ENCODE measurements at regions of chr2 and their contacts with region 1.

Region 1: DNA sequence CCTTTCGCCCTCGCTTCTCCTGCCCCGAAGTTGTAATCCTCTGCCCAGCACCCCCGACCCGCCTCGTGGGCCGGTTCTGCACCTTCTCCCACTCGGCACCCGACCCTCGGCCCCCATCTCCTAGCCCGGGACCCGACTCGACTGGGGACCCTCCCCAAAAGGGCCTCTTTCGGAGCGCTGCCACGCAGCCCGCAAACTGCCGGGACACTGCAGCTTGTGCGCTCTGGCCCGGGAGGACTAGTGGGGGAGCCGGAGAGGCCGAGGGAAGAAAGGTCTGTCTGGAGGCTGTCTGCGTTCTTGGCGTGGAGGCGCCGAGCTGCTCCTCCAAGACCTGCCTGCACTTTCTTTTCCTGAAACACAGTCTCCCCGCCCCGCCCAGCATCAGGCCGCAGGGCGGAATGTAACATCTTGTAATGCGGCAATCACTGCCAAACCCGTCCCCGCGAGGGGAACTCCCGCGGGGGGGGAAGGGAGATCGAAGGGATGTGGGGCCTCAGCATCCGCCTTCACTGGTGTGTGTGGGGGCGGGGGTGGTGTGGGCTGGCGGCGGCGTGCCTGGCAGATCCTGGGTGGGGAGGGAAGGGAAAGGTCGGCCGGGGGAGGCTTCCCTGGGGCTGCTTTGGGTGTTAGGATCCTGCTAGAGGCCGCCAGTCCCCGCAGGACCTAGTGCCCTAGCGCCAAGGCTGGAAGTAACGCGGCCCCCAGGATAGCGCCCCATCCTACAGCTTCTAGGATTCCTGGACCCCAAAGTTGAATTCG is 7.4 kb downstream of the DLX2 start:
- DNase-seq: no peak
- ATAC-seq: peak; percentile 68
- H3K4me3 Mint-ChIP-seq: peak overlapping the region; percentile 81
- H3K27ac Mint-ChIP-seq: peak overlapping the region; percentile 59
- H3K4me1 Mint-ChIP-seq: peaks cover 34% of the 10 kb centered on the region
- H3K27me3 Mint-ChIP-seq: peaks cover 59% of the 10 kb centered on the region
- CTCF ChIP-seq: no peak

Region 2: GRCh38 chr2:171956135-171956825 is 139.0 kb before region 1 on chr2:
- CTCF ChIA-PET with region 1: no interaction called
- POLR2A ChIA-PET with region 1: no interaction called
- intact Hi-C with region 1: no loop called
- DNase-seq: no peak
- ATAC-seq: no peak
- H3K4me3 Mint-ChIP-seq: no peak overlapping the region
- H3K27ac Mint-ChIP-seq: no peak overlapping the region
- H3K4me1 Mint-ChIP-seq: no peaks in the 10 kb centered on the region
- H3K27me3 Mint-ChIP-seq: no peaks in the 10 kb centered on the region
- CTCF ChIP-seq: no peak

Region 3: GRCh38 chr2:172046080-172046678 is 49.1 kb before region 1 on chr2:
- CTCF ChIA-PET with region 1: no interaction called
- POLR2A ChIA-PET with region 1: interaction called, 11 read pairs
- intact Hi-C with region 1: no loop called
- DNase-seq: no peak
- ATAC-seq: no peak
- H3K4me3 Mint-ChIP-seq: no peak overlapping the region
- H3K27ac Mint-ChIP-seq: no peak overlapping the region
- H3K4me1 Mint-ChIP-seq: no peaks in the 10 kb centered on the region
- H3K27me3 Mint-ChIP-seq: no peaks in the 10 kb centered on the region
- CTCF ChIP-seq: no peak

Region 4: GRCh38 chr2:172084734-172085459 is 10.4 kb before region 1 on chr2:
- CTCF ChIA-PET with region 1: no interaction called
- POLR2A ChIA-PET with region 1: interaction called, 4 read pairs
- intact Hi-C with region 1: loop called (anchors 1 kb)
- DNase-seq: peak; percentile 46
- ATAC-seq: peak; percentile 43
- H3K4me3 Mint-ChIP-seq: peak overlapping the region; percentile 75
- H3K27ac Mint-ChIP-seq: peak overlapping the region; percentile 79
- H3K4me1 Mint-ChIP-seq: peaks cover 44% of the 10 kb centered on the region
- H3K27me3 Mint-ChIP-seq: peaks cover 75% of the 10 kb centered on the region
- CTCF ChIP-seq: no peak

Region 5: DNA sequence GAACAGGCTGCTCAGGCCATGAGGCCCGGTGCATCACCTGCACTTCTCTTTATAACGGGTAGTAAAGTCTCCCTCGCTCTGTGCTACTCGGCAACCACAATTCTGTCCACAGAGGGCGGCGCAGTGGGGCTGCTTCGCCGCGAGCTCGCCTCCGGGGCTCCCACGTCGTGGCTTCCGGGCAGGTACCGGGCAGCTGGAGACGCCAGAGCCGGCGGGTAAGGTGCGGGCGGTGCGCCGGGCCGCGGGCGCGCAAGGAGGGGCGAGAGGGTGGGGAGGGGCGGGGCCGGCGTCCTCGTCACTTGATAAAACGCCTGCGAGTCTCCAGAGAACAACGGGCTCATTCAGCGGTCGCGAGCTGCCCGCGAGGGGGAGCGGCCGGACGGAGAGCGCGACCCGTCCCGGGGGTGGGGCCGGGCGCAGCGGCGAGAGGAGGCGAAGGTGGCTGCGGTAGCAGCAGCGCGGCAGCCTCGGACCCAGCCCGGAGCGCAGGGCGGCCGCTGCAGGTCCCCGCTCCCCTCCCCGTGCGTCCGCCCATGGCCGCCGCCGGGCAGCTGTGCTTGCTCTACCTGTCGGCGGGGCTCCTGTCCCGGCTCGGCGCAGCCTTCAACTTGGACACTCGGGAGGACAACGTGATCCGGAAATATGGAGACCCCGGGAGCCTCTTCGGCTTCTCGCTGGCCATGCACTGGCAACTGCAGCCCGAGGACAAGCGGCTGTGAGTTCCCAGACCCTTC is 332.1 kb after region 1 on chr2 and contains the start of gene ITGA6:
- CTCF ChIA-PET with region 1: no interaction called
- POLR2A ChIA-PET with region 1: no interaction called
- intact Hi-C with region 1: loop called (anchors 5 kb)
- DNase-seq: peak; percentile 38
- ATAC-seq: peak; percentile 72
- H3K4me3 Mint-ChIP-seq: peak within 1 kb of the TSS; percentile 79
- H3K27ac Mint-ChIP-seq: no peak within 1 kb of the TSS
- H3K4me1 Mint-ChIP-seq: peaks cover 14% of the 10 kb centered on the region
- H3K27me3 Mint-ChIP-seq: peaks cover 57% of the 10 kb centered on the region
- CTCF ChIP-seq: no peak
- total RNA-seq, gene ITGA6: 0.31 and 0.42 TPM in 2 replicates

Measured in activated B cell treated with CpG ODN at 0.5 μM for 24 hours (primary cell).